HepG2 (cell line): ENCODE measurements at regions of chr9 and their contacts with region 1.

Region 1: GRCh38 chr9:4305586-4305985 is 5.7 kb upstream of the GLIS3 start:
- DNase-seq: no peak
- ATAC-seq: peak; percentile 45
- H3K4me3 ChIP-seq: peak overlapping the region in 2 of 3 experiments; percentile 8 to 14; a peak in 3 of 6 replicates
- H3K27ac ChIP-seq: peak overlapping the region; percentile 21
- H3K4me1 ChIP-seq: peaks cover 43% of the 10 kb centered on the region
- H3K27me3 ChIP-seq: peaks cover 0 to 2% of the 10 kb centered on the region in 2 experiments; a peak in 1 of 5 replicates
- CTCF ChIP-seq: no peak
- EP300 ChIP-seq: no peak
- POLR2A ChIP-seq: no peak
- RAD21 ChIP-seq: no peak

Region 2: DNA sequence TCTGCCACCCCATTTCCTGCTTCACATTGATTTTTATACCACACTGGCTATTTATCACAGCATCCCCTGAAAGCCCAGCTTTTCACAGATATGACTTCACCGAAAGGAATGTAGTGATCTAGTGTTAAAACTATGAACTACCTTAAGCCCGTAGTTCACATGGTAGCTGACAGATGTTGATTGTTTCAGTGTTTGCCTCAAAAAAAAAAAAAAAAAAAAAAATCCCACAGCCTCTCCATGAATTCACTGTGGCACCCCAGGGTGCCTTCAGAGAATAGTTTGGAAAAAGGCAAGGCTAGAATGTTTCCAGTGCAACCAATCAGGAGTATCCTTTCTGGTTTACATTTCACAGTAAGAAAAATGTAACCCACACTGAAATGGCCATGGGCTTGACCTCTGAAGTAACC is 42.8 kb before region 1 on chr9:
- CTCF ChIA-PET with region 1: no interaction called
- POLR2A ChIA-PET with region 1: no interaction called
- in situ Hi-C with region 1: no loop called
- intact Hi-C with region 1: loop called (anchors 2 kb)
- DNase-seq: peak; percentile 76
- ATAC-seq: peak; percentile 62; the same call in 1 of the 3 replicates
- H3K4me3 ChIP-seq: no peak overlapping the region
- H3K27ac ChIP-seq: no peak overlapping the region
- H3K4me1 ChIP-seq: peaks cover 21% of the 10 kb centered on the region
- H3K27me3 ChIP-seq: no peaks in the 10 kb centered on the region; a peak in 1 of 5 replicates
- CTCF ChIP-seq: no peak
- EP300 ChIP-seq: no peak
- POLR2A ChIP-seq: no peak
- RAD21 ChIP-seq: no peak